ENCODE measurements at regions of chr14 and their contacts with region 1.

Region 1: DNA sequence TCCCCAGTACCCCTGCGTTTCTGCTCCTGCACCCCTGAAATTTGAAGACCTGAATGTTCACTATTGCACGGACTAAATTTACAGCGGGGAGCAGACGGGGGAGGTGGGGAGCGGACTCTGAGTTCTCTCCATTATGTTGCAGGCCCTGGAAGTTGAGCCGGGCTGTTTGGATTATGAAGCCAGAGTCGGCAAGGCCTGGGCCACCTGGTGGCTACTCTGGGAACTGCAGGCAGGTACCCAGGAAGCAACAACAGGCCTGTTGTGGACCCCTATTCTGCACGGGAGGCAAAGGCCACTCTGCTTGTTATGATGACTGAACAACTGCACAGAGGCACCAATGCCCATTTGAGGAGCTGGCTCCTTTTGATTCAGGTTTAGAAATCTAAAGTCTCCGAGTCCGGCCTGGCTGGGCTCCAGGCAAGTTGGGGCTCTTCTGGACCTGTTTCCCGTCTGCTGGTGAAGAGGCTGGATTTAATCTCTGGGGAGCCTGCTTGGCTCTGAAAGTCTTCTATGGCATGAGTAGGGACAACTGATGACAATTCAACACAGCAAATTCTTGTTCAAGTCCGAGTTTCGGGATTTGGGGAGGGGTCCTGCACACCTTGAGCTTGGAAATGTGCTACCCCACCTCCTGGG is 34.1 kb upstream of the FAM181A start:
- DNase-seq: peak; percentile 89
- ATAC-seq: peak; percentile 57

Region 2: GRCh38 chr14:93648440-93649168 is 244.4 kb before region 1 on chr14:
- intact Hi-C with region 1: loop called (anchors 1 kb)
- DNase-seq: no peak
- ATAC-seq: no peak

Region 3: GRCh38 chr14:93655078-93655750 is 237.8 kb before region 1 on chr14:
- intact Hi-C with region 1: loop called (anchors 2 kb)
- DNase-seq: no peak
- ATAC-seq: no peak

Region 4: GRCh38 chr14:93824518-93825234 is 68.4 kb before region 1 on chr14:
- intact Hi-C with region 1: no loop called
- DNase-seq: no peak
- ATAC-seq: no peak

Region 5: GRCh38 chr14:93857500-93858283 is 35.3 kb before region 1 on chr14:
- intact Hi-C with region 1: no loop called
- DNase-seq: no peak
- ATAC-seq: no peak

Measured in Right ventricle myocardium inferior (tissue), 1 donor.